Right ventricle myocardium superior (tissue), 1 donor: ENCODE measurements at regions of chr11 and their contacts with region 1.

Region 1: DNA sequence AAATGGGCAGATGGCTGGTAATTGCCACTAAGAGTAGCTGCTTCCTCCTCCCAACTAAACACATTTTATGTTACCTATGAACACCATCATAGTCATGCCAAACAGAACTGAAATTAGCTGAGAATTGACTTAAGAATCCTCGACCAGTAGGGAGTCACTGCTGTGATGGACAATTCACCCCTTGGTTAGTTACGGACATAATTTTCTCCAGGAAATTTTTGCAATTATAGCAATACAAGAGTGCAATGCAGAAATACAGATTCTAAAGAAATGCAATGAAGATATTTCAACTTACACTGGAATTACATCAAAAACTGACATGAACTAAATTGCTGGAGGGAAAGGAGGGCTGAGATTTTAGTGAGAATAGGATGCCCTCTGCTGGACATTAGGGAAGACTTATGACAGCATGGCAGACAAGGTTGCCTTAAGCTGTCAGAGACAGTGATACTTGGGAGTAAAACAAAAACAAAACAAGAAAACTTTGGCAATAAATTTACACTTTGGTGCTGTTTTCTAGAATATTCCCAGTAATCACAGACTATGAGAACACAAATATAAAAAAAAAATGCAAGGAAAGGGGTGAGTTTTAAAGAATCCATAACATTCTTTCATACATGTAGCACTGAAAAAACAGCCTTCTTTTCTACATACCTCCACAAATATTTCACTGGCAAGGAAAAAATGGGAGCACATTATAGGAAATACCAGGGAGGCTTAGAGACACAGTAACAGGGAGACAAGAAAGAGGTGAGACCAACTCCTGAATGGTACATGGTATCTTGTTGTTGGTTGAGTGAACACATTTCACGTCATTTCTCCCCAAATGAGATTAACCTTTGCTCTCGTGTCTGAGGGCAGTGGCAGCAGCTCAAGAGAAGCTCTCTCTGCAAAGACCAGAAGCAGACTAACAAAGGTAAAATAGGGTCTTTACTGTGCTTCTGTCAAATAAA is 11.2 kb upstream of the PPP2R1B start:
- DNase-seq: no peak
- ATAC-seq: peak; percentile 86

Region 2: GRCh38 chr11:111601979-111602864 is 175.1 kb before region 1 on chr11 and contains the start of gene SIK2:
- intact Hi-C with region 1: loop called (anchors 5 kb)
- DNase-seq: peak; percentile 96
- ATAC-seq: peak; percentile 95
- total RNA-seq, gene SIK2: 15.1 TPM